Body of pancreas (tissue), 4 donors: ENCODE measurements at regions of chr17 and their contacts with region 1.

Region 1: GRCh38 chr17:50681263-50682210 is 26.2 kb downstream of the ANKRD40 start:
- DNase-seq: peak in 3 of 4 donors; percentile 30 to 59 (median 49)
- ATAC-seq: no peak
- H3K4me3 ChIP-seq: no peak overlapping the region
- H3K27ac ChIP-seq: peak overlapping the region in 1 of 4 donors; percentile 53
- H3K4me1 ChIP-seq: peaks cover 36% of the 10 kb centered on the region
- H3K27me3 ChIP-seq: no peaks in the 10 kb centered on the region
- CTCF ChIP-seq: peak in 4 of 7 experiments; percentile 17 to 56 (median 49)
- POLR2A ChIP-seq: no peak

Region 2: DNA sequence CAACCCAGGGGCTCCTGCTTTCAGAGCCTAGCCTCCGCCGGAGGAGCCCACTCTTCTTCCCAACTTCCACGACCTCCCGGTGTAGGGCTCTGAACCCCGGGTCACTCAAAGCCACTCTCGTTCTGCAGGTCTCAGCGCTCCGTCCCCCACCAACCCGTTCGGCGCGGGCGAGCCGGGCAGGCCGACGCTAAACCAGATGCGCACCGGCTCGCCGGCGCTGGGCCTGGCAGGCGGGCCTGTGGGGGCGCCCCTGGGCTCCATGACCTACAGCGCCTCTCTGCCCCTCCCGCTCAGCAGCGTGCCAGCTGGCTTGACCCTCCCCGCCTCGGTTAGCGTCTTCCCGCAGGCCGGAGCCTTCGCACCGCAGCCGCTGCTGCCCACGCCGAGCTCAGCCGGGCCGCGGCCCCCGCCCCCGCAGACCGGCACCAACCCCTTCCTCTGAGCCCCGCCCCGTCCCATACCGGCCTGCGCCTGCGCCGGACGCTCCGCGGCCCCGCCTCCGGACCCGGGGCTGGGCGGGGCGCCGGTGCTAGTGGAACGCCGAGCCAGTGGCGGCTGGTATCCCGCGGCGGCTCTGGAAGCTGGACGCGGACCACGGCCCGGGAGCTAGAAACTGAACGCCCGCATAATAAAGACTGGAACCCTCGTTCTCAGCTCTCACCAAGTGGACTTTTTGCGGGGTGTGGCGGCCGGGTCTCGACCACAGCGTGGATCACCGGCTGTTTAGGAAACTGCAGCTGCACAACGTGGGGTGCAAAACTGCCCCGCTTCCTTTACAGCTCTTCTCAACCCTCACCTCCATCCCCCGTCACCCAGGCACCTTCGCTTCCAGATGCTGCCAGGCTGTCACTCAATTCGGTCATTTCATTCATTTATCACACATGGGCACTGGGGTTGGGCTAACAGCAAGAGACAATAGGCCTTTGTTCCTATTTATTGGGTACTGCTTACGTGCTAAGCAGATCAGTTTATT is 139.5 kb before region 1 on chr17:
- intact Hi-C with region 1: no loop called
- DNase-seq: peak; percentile 87 to 90 (median 88)
- ATAC-seq: peak; percentile 75
- H3K4me3 ChIP-seq: peak overlapping the region in 1 of 2 donors; percentile 3
- H3K27ac ChIP-seq: peak overlapping the region; percentile 71 to 92 (median 87)
- H3K4me1 ChIP-seq: peaks cover 71% of the 10 kb centered on the region
- H3K27me3 ChIP-seq: no peaks in the 10 kb centered on the region
- CTCF ChIP-seq: peak in 4 of 7 experiments; percentile 4 to 27 (median 6)
- POLR2A ChIP-seq: peak; percentile 48 to 55 (median 49)

Region 3: GRCh38 chr17:50649042-50649904 is 32.3 kb before region 1 on chr17:
- intact Hi-C with region 1: loop called (anchors 5 kb)
- DNase-seq: no peak
- ATAC-seq: no peak
- H3K4me3 ChIP-seq: no peak overlapping the region
- H3K27ac ChIP-seq: no peak overlapping the region
- H3K4me1 ChIP-seq: peaks cover 9% of the 10 kb centered on the region
- H3K27me3 ChIP-seq: no peaks in the 10 kb centered on the region
- CTCF ChIP-seq: no peak
- POLR2A ChIP-seq: no peak